Transverse colon (tissue), 4 donors: ENCODE measurements at regions of chr13 and their contacts with region 1.

Region 1: DNA sequence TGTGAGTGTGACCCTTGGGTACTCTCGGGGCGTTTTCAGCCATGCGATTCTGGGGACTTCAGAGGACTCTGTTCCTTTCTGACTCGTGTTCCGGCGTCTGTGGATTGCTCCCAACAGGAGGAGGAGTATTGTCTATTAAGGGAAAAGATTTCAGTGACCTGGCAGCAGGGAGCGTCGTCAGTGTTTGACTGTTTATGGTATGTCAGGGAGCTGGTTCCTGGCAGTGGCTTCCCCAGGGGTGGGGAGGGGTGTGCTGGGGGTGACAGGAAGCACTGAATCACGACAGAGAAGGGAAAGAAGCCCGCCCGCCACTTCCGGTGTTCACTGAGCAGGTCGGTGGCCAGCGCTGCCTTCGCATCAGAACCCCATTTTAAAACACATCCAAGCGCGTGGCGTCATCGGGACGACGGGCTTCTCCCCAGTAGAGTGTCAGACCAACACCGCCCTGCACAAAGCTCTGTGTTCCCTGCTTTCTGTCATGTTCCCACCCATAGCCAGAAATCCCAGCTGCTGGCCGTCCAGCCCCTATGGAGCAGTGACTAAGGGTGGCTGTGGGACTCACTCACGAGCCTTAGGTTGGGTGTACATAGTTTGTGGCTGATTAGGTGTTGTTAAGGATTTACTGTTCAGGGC is 33.8 kb downstream of the COL4A2 start:
- DNase-seq: peak; percentile 76
- H3K4me3 ChIP-seq: no peak overlapping the region
- H3K27ac ChIP-seq: peak overlapping the region; percentile 84 to 87 (median 86)
- H3K4me1 ChIP-seq: peaks cover 24 to 86% (median 45%) of the 10 kb centered on the region in 4 donors
- H3K27me3 ChIP-seq: no peaks in the 10 kb centered on the region
- CTCF ChIP-seq: no peak
- EP300 ChIP-seq: peak; percentile 83
- POLR2A ChIP-seq: peak; percentile 31

Region 2: GRCh38 chr13:109642358-109642757 is 698.6 kb before region 1 on chr13:
- in situ Hi-C with region 1: no loop called
- intact Hi-C with region 1: no loop called
- DNase-seq: no peak
- H3K4me3 ChIP-seq: no peak overlapping the region
- H3K27ac ChIP-seq: no peak overlapping the region
- H3K4me1 ChIP-seq: no peaks in the 10 kb centered on the region
- H3K27me3 ChIP-seq: no peaks in the 10 kb centered on the region
- CTCF ChIP-seq: no peak
- EP300 ChIP-seq: no peak
- POLR2A ChIP-seq: no peak

Region 3: DNA sequence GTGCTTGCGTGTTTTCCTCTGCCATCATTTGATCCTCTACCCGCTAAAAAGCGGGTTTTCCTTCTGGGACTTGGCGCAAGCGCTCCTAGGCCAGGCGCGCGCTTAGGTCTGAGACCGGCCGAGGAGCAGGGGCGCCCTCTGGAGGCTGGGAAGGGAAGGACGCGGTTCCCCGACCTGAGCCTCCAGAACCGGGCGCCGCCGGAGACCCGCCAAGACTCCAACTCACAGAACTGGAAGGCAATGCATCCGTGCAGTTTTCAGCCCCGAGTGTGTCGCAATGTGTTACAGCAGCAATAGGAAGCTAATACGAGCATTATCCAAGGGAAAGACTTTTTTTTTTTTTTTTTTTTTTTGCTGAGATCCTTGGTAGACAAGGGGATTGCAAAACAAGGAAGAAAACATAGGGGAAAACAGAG is 224.8 kb before region 1 on chr13:
- in situ Hi-C with region 1: no loop called
- intact Hi-C with region 1: no loop called
- DNase-seq: peak; percentile 63
- H3K4me3 ChIP-seq: no peak overlapping the region
- H3K27ac ChIP-seq: no peak overlapping the region
- H3K4me1 ChIP-seq: no peaks in the 10 kb centered on the region
- H3K27me3 ChIP-seq: peaks cover 28% of the 10 kb centered on the region
- CTCF ChIP-seq: peak; percentile 67 to 81 (median 75)
- EP300 ChIP-seq: no peak
- POLR2A ChIP-seq: no peak

Region 4: DNA sequence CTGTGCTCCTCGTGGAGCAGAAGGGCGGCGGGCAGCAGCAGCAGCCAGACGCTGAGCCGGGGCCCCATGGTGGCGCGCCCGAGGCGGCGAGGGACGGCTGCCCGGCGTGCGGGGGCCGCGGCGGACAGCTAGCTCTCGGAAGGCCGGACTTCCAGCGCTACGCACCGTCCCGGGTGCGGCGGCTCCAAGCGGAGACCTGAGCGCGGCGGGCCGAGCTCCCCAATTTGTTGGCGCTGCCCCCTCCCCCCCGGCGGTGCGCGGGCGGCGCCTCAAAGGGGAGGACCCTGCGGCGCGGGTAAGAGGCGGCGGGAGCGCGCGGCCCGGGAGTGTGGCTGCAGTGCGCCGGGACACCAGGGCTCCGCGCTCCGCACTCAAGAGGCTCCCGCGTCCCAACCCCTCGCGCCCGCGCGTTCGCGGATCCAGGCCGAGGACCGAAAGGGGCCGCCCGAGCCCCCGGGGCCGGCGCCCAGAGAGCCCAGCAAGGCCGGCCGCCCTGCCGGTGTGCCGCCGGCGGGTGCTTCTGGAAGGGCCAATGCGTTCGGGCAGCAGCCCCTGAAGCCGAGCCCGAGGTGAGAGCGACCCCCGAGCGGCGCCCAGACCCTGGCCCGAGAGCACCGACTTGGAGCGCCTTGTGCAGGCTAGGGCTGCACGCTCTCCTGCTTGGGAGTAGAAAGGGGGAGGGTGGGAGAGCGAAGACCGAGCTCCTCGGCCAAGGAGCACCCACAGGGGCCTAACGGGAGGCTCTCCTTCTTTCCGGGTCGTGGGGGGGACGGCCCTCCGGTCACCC is 33.8 kb before region 1 on chr13 and contains the starts of genes COL4A1 and COL4A2:
- in situ Hi-C with region 1: no loop called
- intact Hi-C with region 1: loop called (anchors 5 kb)
- DNase-seq: peak; percentile 61
- H3K4me3 ChIP-seq: peak within 1 kb of the TSS; percentile 58 to 88 (median 74)
- H3K27ac ChIP-seq: peak within 1 kb of the TSS; percentile 88 to 98 (median 94)
- H3K4me1 ChIP-seq: peaks cover 0 to 39% (median 28%) of the 10 kb centered on the region in 4 donors
- H3K27me3 ChIP-seq: peaks cover 37% of the 10 kb centered on the region
- CTCF ChIP-seq: no peak
- EP300 ChIP-seq: no peak
- POLR2A ChIP-seq: peak; percentile 69
- total RNA-seq, gene COL4A1: 46.4 to 180 (median 99.2) TPM
- total RNA-seq, gene COL4A2: 75.1 to 322 (median 115) TPM

Region 5: GRCh38 chr13:110374431-110375370 is 33.8 kb after region 1 on chr13:
- in situ Hi-C with region 1: no loop called
- intact Hi-C with region 1: loop called (anchors 1 kb)
- DNase-seq: no peak
- H3K4me3 ChIP-seq: no peak overlapping the region
- H3K27ac ChIP-seq: peak overlapping the region; percentile 1 to 69 (median 48)
- H3K4me1 ChIP-seq: peaks cover 5 to 33% (median 8%) of the 10 kb centered on the region in 4 donors
- H3K27me3 ChIP-seq: no peaks in the 10 kb centered on the region
- CTCF ChIP-seq: no peak
- EP300 ChIP-seq: no peak
- POLR2A ChIP-seq: no peak